Heart left ventricle (tissue), 16 donors: ENCODE measurements at regions of chr6 and their contacts with region 1.

Region 1: GRCh38 chr6:31739639-31740396 is at the start of gene MSH5:
- DNase-seq: peak; percentile 97 to 99 (median 98)
- ATAC-seq: peak; percentile 93 to 98 (median 94)
- H3K4me3 ChIP-seq: peak within 1 kb of the TSS; percentile 40 to 89 (median 74)
- H3K27ac ChIP-seq: peak within 1 kb of the TSS in 10 of 12 donors; percentile 16 to 99 (median 62)
- H3K4me1 ChIP-seq: peaks cover 0 to 41% (median 34%) of the 10 kb centered on the region in 12 donors
- H3K27me3 ChIP-seq: no peaks in the 10 kb centered on the region
- CTCF ChIP-seq: no peak
- POLR2A ChIP-seq: peak in 1 of 2 donors; percentile 63
- total RNA-seq, gene MSH5: 0.44 to 8.4 (median 1.9) TPM

Region 2: GRCh38 chr6:31568537-31568961 is 171.3 kb before region 1 on chr6:
- intact Hi-C with region 1: no loop called
- DNase-seq: no peak
- ATAC-seq: peak in 3 of 4 donors; percentile 36 to 62 (median 44)
- H3K4me3 ChIP-seq: no peak overlapping the region
- H3K27ac ChIP-seq: peak overlapping the region in 1 of 12 donors; percentile 50
- H3K4me1 ChIP-seq: peaks cover 0 to 25% (median 0%) of the 10 kb centered on the region in 12 donors
- H3K27me3 ChIP-seq: no peaks in the 10 kb centered on the region
- CTCF ChIP-seq: no peak
- POLR2A ChIP-seq: no peak

Region 3: GRCh38 chr6:31702819-31703522 is 36.8 kb before region 1 on chr6 and contains the start of gene ABHD16A:
- intact Hi-C with region 1: loop called in 1 of 10 experiments (anchors 5 kb)
- DNase-seq: peak; percentile 99 to 100 (median 99)
- ATAC-seq: peak; percentile 96 to 99 (median 98)
- H3K4me3 ChIP-seq: peak within 1 kb of the TSS; percentile 58 to 99 (median 78)
- H3K27ac ChIP-seq: peak within 1 kb of the TSS; percentile 90 to 100 (median 98)
- H3K4me1 ChIP-seq: peaks cover 3 to 30% (median 21%) of the 10 kb centered on the region in 12 donors
- H3K27me3 ChIP-seq: no peaks in the 10 kb centered on the region
- CTCF ChIP-seq: peak in 2 of 12 donors; percentile 14 to 20
- POLR2A ChIP-seq: peak; percentile 88 to 98
- total RNA-seq, gene ABHD16A: 24.2 to 54.7 (median 27.4) TPM

Region 4: DNA sequence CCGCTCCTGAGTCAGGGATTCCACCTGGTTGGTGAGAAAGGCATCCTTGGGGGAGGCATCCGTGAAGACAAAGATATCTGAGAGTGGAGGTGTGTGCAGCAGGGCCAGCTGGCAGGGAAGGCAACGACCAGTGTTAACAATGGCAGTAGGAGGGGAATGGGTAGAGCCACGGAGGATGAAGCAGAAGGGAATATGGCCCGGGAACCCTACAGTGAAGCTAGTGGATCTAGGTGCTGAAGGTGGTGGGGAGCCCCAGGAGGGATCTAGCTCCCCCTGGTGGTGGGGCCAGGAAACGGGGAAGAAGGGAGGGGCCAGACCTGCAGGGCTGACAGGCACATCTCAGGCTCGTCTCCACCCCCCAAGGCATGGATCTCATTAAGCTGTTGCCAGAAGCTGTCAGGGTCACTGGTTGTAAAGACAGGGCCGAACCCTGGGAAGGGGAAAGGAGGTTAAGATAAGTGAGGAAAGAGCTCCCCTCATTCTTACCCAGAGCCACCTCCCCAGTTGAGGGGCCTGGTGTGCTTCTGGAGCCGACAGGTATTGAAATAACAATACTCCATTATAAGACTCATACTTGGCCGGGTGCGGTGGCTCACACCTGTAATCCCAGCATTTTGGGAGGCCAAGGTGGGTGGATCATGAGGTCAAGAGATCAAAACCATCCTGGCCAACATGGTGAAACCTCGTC is 30.0 kb after region 1 on chr6:
- intact Hi-C with region 1: loop called in 2 of 10 experiments (anchors 2 to 5 kb)
- DNase-seq: peak; percentile 54 to 87 (median 67)
- ATAC-seq: peak in 3 of 4 donors; percentile 61 to 71 (median 67)
- H3K4me3 ChIP-seq: no peak overlapping the region
- H3K27ac ChIP-seq: no peak overlapping the region
- H3K4me1 ChIP-seq: peaks cover 0 to 41% (median 0%) of the 10 kb centered on the region in 12 donors
- H3K27me3 ChIP-seq: no peaks in the 10 kb centered on the region
- CTCF ChIP-seq: peak; percentile 56 to 86 (median 68)
- POLR2A ChIP-seq: no peak

Region 5: DNA sequence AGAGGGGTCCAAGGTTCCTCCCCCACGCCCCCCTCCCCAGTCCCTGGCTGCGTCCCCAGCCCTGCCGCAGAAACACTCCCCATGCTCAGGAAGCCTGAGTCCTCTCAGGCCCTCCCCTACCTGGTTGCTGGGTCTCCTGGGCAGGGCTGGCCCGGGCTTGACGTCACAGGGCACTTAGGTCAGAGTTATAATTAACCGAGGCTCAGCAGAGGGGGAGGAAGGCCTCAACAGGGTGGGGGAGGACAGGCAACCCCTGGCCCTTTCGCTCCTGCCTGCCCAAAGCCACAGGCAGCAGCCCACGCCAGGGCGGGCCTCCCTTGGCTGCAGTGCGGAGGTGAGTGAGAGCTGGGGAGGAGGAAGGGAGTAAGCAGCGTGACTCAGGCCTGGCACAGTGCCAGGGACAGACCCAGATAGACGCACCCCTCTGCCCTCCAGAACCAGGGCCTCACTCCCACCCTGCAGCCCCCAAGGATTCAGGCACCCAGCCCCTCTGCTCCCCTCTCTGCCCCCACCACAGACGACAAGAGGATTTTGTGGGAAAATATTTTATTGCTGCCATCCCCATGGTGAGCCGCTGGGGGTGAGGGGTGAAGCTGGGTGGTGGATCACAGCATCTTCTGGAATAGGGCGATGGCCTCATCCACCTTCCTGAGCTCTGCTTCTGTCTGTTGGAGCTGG is 37.3 kb after region 1 on chr6 and contains the start of gene VWA7:
- intact Hi-C with region 1: loop called in 1 of 10 experiments (anchors 5 kb)
- DNase-seq: peak; percentile 73 to 90 (median 78)
- ATAC-seq: peak; percentile 85 to 93 (median 88)
- H3K4me3 ChIP-seq: peak within 1 kb of the TSS in 10 of 12 donors; percentile 13 to 49 (median 38)
- H3K27ac ChIP-seq: peak within 1 kb of the TSS in 11 of 12 donors; percentile 38 to 85 (median 79)
- H3K4me1 ChIP-seq: peaks cover 0 to 22% (median 13%) of the 10 kb centered on the region in 12 donors
- H3K27me3 ChIP-seq: no peaks in the 10 kb centered on the region
- CTCF ChIP-seq: no peak
- POLR2A ChIP-seq: peak in 1 of 2 donors; percentile 49
- total RNA-seq, gene VWA7: 8.0 to 25.8 (median 16.1) TPM

Region 6: GRCh38 chr6:31795616-31796298 is 55.9 kb after region 1 on chr6 and contains the start of gene VARS1:
- intact Hi-C with region 1: loop called in 1 of 10 experiments (anchors 10 kb)
- DNase-seq: peak; percentile 92 to 98 (median 95)
- ATAC-seq: peak; percentile 81 to 97 (median 96)
- H3K4me3 ChIP-seq: peak within 1 kb of the TSS; percentile 67 to 98 (median 84)
- H3K27ac ChIP-seq: peak within 1 kb of the TSS; percentile 87 to 99 (median 96)
- H3K4me1 ChIP-seq: peaks cover 0 to 39% (median 18%) of the 10 kb centered on the region in 12 donors
- H3K27me3 ChIP-seq: no peaks in the 10 kb centered on the region
- CTCF ChIP-seq: peak; percentile 71 to 98 (median 85)
- POLR2A ChIP-seq: peak in 1 of 2 donors; percentile 59
- total RNA-seq, gene VARS1: 18.6 to 61.8 (median 26.1) TPM

Region 7: GRCh38 chr6:31814677-31815024 is 74.8 kb after region 1 on chr6:
- intact Hi-C with region 1: loop called in 1 of 10 experiments (anchors 5 kb)
- DNase-seq: peak; percentile 94 to 98 (median 97)
- ATAC-seq: peak; percentile 84 to 89 (median 87)
- H3K4me3 ChIP-seq: peak overlapping the region; percentile 22 to 76 (median 66)
- H3K27ac ChIP-seq: peak overlapping the region; percentile 91 to 100 (median 99)
- H3K4me1 ChIP-seq: peaks cover 0 to 39% (median 28%) of the 10 kb centered on the region in 12 donors
- H3K27me3 ChIP-seq: no peaks in the 10 kb centered on the region
- CTCF ChIP-seq: no peak
- POLR2A ChIP-seq: peak in 1 of 2 donors; percentile 61

Region 8: DNA sequence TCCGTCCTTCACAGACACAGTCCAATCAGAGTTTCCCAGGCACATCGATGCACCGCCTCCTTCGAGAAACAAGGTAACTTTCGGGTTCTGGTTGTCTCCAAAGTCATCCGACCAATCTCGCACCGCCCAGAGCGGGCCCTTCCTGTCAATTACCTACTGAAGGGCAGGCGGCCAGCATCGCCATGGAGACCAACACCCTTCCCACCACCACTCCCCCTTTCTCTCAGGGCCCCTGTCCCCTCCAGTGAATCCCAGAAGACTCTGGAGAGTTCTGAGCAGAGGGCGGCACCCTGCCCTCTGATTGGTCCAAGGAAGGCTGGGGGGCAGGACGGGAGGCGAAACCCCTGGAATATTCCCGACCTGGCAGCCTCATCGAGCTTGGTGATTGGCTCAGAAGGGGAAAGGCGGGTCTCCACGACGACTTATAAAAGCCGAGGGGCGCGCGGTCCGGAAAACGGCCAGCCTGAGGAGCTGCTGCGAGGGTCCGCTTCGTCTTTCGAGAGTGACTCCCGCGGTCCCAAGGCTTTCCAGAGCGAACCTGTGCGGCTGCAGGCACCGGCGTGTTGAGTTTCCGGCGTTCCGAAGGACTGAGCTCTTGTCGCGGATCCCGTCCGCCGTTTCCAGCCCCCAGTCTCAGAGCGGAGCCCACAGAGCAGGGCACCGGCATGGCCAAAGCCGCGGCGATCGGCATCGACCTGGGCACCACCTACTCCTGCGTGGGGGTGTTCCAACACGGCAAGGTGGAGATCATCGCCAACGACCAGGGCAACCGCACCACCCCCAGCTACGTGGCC is 87.7 kb after region 1 on chr6 and contains the start of gene HSPA1B:
- intact Hi-C with region 1: loop called in 2 of 10 experiments (anchors 5 to 10 kb)
- DNase-seq: peak; percentile 98 to 100 (median 99)
- ATAC-seq: peak; percentile 94 to 97 (median 96)
- H3K4me3 ChIP-seq: peak within 1 kb of the TSS; percentile 41 to 82 (median 73)
- H3K27ac ChIP-seq: peak within 1 kb of the TSS; percentile 89 to 98 (median 96)
- H3K4me1 ChIP-seq: peaks cover 0 to 52% (median 30%) of the 10 kb centered on the region in 12 donors
- H3K27me3 ChIP-seq: no peaks in the 10 kb centered on the region
- CTCF ChIP-seq: no peak
- POLR2A ChIP-seq: peak; percentile 100
- total RNA-seq, gene HSPA1B: 120 to 306 (median 146) TPM